Cardiac septum (tissue), 1 donor: ENCODE measurements at regions of chr3 and their contacts with region 1.

Region 1: DNA sequence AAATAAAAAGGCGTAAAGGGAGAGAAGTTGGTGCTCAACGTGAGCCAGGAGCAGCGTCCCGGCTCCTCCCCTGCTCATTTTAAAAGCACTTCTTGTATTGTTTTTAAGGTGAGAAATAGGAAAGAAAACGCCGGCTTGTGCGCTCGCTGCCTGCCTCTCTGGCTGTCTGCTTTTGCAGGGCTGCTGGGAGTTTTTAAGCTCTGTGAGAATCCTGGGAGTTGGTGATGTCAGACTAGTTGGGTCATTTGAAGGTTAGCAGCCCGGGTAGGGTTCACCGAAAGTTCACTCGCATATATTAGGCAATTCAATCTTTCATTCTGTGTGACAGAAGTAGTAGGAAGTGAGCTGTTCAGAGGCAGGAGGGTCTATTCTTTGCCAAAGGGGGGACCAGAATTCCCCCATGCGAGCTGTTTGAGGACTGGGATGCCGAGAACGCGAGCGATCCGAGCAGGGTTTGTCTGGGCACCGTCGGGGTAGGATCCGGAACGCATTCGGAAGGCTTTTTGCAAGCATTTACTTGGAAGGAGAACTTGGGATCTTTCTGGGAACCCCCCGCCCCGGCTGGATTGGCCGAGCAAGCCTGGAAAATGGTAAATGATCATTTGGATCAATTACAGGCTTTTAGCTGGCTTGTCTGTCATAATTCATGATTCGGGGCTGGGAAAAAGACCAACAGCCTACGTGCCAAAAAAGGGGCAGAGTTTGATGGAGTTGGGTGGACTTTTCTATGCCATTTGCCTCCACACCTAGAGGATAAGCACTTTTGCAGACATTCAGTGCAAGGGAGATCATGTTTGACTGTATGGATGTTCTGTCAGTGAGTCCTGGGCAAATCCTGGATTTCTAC is at the start of gene RARB:
- DNase-seq: peak; percentile 84
- total RNA-seq, gene RARB: 20.3 TPM

Region 2: DNA sequence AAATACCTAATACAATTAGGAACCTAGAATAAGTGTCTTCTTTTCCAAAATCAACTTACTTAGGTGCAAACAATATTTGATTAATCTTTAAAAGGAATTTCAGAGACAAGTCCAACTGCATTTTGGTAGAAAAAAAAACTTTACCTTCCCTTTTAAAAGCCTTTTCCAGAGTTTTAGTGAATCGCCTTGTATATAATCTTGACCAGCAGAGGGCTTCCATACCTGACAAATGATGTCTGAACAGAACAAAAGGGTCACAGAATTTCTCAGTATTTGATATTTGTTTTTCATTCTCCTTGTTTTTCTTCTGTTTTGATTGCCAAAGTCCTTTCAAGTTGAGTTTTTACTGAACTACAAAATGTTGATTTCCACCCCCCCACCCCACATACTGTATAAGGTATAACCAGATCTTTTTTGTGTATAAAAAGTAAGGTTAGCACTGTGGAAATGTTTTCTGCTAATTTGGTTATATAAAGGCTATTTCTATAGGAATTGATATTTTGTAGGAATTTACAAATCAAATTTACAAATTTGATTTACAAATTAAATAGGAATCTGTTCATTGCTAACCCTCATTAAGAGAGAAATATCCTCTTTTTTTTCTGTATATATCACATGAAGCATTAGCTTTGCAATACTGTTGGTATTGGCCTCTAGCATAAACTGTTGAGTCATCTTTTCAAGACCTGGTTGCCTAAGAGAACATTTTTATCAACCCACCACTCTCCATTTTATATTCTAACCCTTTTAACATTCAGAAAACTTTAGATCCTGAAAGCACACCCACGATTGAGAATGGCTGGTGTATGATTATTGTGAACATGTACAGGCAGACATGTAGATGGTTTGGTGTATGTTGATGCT is 464.2 kb before region 1 on chr3:
- intact Hi-C with region 1: loop called (anchors 5 kb)
- DNase-seq: no peak

Region 3: DNA sequence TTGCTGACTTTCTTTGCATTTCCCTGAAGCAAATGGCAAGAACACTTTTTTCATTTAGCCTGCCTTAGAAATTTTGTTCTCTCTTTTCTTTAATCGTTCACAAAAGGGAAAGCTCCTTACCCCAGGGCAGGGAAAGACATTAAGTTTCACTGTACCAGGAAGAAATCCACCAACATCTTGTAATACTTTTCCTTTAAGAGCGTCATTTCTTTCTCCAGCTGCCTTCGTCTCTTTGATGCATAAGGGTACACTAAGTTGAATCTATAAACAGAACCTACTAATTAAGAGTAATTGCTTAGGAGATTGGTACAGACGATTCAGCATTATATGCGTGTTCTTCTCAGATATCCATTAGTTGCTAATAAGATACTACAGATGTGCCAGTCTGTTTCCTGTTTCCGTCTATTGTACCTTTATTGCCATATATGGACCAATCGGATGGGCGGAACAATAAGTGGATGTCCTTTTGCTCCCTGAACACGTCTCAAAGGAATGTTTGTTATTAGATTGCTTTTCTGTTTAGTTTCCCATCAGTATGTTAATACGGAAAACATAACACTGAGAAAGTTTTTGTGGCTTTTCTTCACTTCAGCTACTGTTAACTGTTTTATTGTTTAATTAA is 276.8 kb before region 1 on chr3:
- intact Hi-C with region 1: loop called (anchors 5 kb)
- DNase-seq: no peak

Region 4: GRCh38 chr3:25468866-25469319 is 40.7 kb after region 1 on chr3:
- intact Hi-C with region 1: loop called (anchors 5 kb)
- DNase-seq: peak; percentile 82